Ascending aorta (tissue), 2 donors: ENCODE measurements at regions of chr10 and their contacts with region 1.

Region 1: GRCh38 chr10:126504063-126504739 is 115.9 kb upstream of the ADAM12 start:
- DNase-seq: no peak
- H3K4me3 ChIP-seq: no peak overlapping the region
- H3K27ac ChIP-seq: no peak overlapping the region
- H3K4me1 ChIP-seq: no peaks in the 10 kb centered on the region
- H3K27me3 ChIP-seq: no peaks in the 10 kb centered on the region
- CTCF ChIP-seq: peak; percentile 43 to 52 (median 45)

Region 2: GRCh38 chr10:125868372-125868975 is 635.7 kb before region 1 on chr10:
- intact Hi-C with region 1: loop called (anchors 5 kb)
- DNase-seq: no peak
- H3K4me3 ChIP-seq: no peak overlapping the region
- H3K27ac ChIP-seq: no peak overlapping the region
- H3K4me1 ChIP-seq: no peaks in the 10 kb centered on the region
- H3K27me3 ChIP-seq: no peaks in the 10 kb centered on the region
- CTCF ChIP-seq: peak; percentile 27 to 66 (median 55)

Region 3: GRCh38 chr10:126387023-126387921 is 116.9 kb before region 1 on chr10:
- intact Hi-C with region 1: loop called (anchors 5 kb)
- DNase-seq: peak in 1 of 2 donors; percentile 72
- H3K4me3 ChIP-seq: peak overlapping the region; percentile 60 to 68
- H3K27ac ChIP-seq: no peak overlapping the region
- H3K4me1 ChIP-seq: peaks cover 0 to 5% of the 10 kb centered on the region in 2 donors
- H3K27me3 ChIP-seq: no peaks in the 10 kb centered on the region
- CTCF ChIP-seq: peak; percentile 45 to 78 (median 71)

Region 4: DNA sequence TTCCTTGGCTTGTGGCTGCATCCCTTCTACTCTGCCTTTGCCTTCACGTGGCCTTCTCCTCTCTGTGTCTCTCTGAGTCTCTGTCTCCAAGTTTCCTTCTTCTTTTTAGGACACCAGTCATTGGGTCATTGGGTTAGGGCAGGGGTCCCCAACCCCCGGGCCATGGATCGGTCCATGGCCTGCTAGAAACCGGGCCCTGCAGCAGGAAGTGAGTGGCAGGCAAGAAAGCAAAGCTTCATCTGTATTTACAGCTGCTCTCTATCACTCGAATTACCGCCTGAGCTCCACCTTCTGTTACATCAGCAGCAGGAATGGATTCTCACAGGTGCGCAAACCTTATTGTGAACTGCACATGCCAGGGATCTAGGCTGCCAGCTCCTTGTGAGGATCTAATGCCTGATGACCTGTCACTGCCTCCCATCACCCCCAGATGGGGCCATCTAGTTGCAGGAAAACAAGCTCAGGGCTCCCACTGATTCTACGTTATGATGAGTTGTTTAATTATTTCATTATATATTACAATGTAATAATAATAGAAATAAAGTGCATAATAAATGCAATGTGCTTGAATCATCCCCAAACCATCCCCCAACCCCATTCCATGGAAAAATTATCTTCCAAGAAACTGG is 353.1 kb after region 1 on chr10:
- intact Hi-C with region 1: no loop called
- DNase-seq: peak in 1 of 2 donors; percentile 40
- H3K4me3 ChIP-seq: no peak overlapping the region
- H3K27ac ChIP-seq: no peak overlapping the region
- H3K4me1 ChIP-seq: no peaks in the 10 kb centered on the region
- H3K27me3 ChIP-seq: no peaks in the 10 kb centered on the region
- CTCF ChIP-seq: no peak